Left ventricle myocardium superior (tissue), 1 donor: ENCODE measurements at regions of chr1 and their contacts with region 1.

Region 1: DNA sequence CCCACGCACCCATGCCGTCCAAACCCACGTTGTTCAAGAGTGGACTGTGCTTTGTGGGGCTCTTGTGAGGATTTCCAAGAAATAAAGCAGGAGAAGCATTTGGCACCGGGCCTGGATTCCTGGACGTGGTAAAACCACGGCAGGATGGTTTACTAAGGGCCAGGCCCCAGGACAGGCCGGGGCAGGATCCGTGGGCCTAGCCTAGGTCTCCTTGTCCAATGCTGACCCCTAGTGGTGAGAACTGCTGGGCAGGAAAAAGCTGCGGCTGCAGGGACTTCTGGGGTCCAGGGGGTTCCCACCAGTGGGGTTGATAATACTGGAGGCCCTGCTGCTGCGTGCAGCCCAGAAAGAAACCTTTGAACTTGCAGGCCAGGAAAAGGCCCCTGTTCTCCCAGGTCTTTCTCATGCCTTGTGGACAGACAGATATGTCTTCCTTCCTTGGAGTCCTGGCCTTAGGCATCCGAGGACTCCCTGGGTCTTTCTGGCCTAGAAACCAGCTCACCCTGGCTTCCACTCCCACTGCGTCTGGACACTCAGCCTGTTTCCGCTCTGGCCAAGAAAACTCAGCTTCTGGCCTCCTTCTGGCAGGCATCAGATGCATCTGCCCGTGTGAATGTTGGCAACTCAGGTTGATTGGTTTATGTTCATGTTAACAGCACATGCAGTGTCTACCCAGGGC is 106.9 kb upstream of the TMEM51 start:
- DNase-seq: peak; percentile 70
- ATAC-seq: peak; percentile 85

Region 2: DNA sequence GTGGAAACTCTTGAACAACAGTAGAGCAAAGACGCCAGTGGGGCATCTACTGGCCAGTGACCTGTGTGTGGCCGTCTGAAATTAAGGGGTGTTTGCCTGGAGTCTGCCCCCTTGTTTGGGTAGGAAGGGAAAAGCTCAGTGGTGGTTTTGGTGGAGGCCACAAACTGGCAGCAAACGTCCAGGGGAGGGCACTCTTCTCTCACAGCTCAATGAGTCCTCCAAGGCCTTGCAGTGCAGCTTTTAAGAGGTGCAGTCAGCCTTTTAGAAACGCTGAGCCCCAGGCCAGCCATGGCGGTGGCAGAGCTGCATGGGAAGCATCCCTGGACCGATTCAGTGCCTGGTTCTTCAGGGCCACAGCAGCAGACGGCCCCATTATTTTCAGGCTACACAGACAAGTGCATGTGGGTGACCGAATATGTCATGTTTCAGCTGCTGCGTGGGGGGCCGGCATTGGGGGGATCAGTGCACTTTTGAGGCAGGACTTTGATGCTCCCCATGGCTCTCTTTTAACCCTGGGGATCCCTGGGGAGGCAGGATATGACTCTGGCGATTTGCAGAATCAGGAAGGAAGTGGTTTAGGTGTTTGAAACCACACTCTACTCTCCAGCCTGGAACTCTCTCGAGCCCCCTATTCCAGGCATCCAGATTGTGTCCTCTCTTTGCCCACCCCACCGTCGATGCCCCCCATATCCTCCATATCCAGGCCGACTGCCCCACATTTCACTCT is 932.6 kb before region 1 on chr1:
- intact Hi-C with region 1: loop called (anchors 5 kb)
- DNase-seq: peak; percentile 58
- ATAC-seq: peak; percentile 75

Region 3: DNA sequence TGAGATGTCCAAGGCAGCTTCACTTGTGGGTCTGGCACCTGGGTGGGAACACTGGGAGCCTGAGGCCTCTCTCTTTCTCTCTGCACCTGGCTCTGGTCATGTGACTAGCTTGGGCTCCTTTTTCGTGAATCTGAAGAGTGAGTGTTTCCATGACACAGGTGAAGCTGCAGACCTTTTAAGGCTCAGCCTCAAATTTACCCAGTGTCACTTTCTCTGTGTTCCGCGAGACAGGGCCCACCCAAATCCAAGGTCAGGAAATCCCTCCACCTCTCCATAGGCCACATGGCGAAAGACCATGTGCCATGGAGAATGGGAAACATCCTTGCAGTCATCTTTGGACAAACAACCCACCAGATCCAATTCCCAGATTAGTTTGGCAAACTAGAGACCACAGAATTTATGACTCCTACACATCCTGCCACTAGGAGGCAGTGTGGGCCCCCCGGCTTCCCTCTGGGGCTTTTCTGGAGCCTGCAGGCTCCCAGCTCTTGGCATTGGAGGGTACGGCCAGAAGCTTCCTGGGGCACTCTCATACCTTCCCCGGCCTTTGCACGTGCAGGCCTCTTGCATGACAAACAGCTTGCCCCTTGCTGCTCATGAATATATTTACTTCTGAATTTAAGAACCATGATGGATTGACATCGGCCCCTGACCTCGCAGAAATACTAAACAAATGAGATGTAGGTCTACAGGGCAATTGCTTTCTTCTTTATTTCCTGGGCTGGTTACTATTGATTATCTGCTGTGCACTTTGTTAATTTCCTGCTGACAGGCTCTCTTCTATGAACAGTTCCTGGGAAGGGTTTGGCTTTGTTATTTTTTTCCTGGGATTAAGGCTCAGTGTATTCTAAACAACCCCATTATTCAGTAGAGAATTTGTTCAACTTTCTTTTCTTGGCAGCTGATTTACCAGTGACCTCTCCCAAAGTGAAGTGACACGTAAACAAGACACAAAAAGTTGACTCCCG is 267.4 kb before region 1 on chr1:
- intact Hi-C with region 1: loop called (anchors 5 kb)
- DNase-seq: peak; percentile 38
- ATAC-seq: no peak

Region 4: DNA sequence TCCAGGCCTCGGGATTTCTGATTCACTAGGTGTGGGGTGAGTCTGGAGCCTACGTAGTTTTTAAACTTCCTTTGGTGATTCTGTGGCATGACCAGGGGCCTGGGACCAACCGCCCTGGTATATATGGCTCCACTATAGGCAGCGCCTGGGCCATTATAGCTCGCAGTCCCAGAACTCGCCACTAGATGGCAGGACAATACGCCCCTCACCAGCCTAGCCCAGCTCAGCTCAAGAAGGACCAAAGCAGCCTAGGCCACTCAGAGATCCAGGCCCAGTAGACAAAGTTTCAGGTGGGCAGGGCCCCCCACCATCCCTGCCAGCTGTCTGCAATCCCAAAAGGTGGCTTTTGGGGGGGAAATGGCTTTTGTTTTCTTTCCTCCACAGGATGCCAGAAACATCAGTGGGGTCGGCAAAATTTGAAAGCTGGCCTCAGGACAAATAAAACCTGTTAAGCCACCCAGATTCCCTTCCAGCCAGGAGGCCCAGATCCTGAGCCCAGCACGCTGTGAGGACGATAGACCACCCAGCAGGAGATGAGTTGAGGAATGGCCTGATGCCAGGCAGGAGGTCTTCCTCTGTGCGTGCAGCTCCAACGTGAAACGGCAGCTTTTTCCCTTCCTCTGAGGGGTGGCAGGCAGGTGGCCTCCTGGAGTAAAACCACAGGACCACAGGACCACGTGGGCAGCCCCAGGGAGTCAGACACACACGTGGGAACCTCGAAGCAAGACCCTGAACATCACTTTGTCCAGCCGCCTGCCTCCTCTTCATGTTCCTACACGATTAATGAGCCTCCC is 82.1 kb after region 1 on chr1:
- intact Hi-C with region 1: no loop called
- DNase-seq: peak; percentile 78
- ATAC-seq: peak; percentile 95